ENCODE measurements at regions of chr5 and their contacts with region 1.

Region 1: GRCh38 chr5:147782110-147783028 is at the start of gene JAKMIP2:
- DNase-seq: peak; percentile 97
- H3K4me3 ChIP-seq: peak within 1 kb of the TSS; percentile 79
- H3K27ac ChIP-seq: peak within 1 kb of the TSS; percentile 85
- H3K4me1 ChIP-seq: peaks cover 29% of the 10 kb centered on the region
- CTCF ChIP-seq: peak; percentile 64
- total RNA-seq, gene JAKMIP2: 4.0 and 6.2 TPM in 2 replicates

Region 2: GRCh38 chr5:147805030-147805454 is 22.7 kb after region 1 on chr5:
- CTCF ChIA-PET with region 1: interaction called, 4 read pairs
- POLR2A ChIA-PET with region 1: interaction called, 15 read pairs
- intact Hi-C with region 1: loop called (anchors 1 kb)
- DNase-seq: peak; percentile 67
- H3K4me3 ChIP-seq: peak overlapping the region; percentile 18
- H3K27ac ChIP-seq: peak overlapping the region; percentile 16
- H3K4me1 ChIP-seq: peaks cover 21% of the 10 kb centered on the region
- CTCF ChIP-seq: no peak

Measured in OCI-LY7 (cell line).